ENCODE measurements at regions of chr10 and their contacts with region 1.

Region 1: DNA sequence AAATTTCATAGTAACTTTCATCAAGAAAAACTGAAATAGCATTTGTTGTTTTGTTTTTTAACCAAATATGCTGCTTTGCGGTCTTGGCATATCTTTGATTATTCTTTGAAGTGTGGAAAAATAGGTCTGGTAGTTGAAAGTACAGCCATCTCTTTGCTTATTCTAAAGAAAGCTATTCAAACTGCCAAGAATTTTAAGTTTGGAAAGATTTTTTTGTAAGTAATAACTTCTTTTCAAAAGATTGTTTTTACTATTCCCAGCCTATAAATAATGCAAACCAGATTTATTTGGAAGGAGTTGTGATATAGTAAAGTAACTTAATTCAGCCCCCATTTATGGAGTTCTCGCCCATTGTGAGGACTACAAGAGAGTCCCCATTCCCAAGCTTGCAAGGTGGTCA is 87.0 kb downstream of the ADD3 start:
- DNase-seq: no peak
- ATAC-seq: no peak
- H3K4me3 Mint-ChIP-seq: no peak overlapping the region
- H3K27ac Mint-ChIP-seq: no peak overlapping the region
- H3K4me1 Mint-ChIP-seq: peaks cover 73% of the 10 kb centered on the region
- H3K27me3 Mint-ChIP-seq: no peaks in the 10 kb centered on the region

Region 2: DNA sequence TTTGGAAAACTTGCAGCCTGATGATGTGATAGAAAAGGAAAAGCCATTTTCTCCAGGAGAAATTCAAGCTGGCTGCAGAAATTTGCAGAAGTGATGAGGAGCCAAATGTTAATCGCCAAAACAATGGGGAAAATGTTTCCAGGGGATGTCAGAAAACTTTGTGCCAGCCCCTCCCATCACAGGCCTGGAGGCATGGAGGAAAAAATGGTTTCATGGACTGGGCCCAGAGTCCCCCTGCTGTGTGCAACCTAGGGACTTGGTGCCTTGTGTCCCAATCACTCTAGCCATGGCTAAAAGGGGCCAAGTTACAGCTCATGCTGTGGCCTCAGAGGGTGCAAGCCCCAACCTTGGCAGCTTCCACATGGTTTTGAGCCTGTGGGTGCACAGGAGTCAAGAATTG is 46.0 kb before region 1 on chr10:
- CTCF ChIA-PET with region 1: no interaction called
- POLR2A ChIA-PET with region 1: no interaction called
- intact Hi-C with region 1: no loop called
- DNase-seq: no peak
- ATAC-seq: no peak
- H3K4me3 Mint-ChIP-seq: no peak overlapping the region
- H3K27ac Mint-ChIP-seq: no peak overlapping the region
- H3K4me1 Mint-ChIP-seq: peaks cover 57% of the 10 kb centered on the region
- H3K27me3 Mint-ChIP-seq: no peaks in the 10 kb centered on the region

Region 3: GRCh38 chr10:110081911-110082310 is 12.9 kb before region 1 on chr10:
- CTCF ChIA-PET with region 1: interaction called, 13 read pairs
- POLR2A ChIA-PET with region 1: no interaction called
- intact Hi-C with region 1: no loop called
- DNase-seq: no peak
- ATAC-seq: no peak
- H3K4me3 Mint-ChIP-seq: peak overlapping the region; percentile 26
- H3K27ac Mint-ChIP-seq: peak overlapping the region; percentile 88
- H3K4me1 Mint-ChIP-seq: peaks cover 89% of the 10 kb centered on the region
- H3K27me3 Mint-ChIP-seq: no peaks in the 10 kb centered on the region